ENCODE measurements at regions of chr2 and their contacts with region 1.

Region 1: GRCh38 chr2:109575373-109575772 is 38.4 kb downstream of the SEPTIN10 start:
- DNase-seq: no peak
- ATAC-seq: no peak
- H3K4me3 ChIP-seq: no peak overlapping the region
- H3K27ac ChIP-seq: no peak overlapping the region
- H3K4me1 ChIP-seq: no peaks in the 10 kb centered on the region
- H3K27me3 ChIP-seq: no peaks in the 10 kb centered on the region
- CTCF ChIP-seq: no peak
- POLR2A ChIP-seq: no peak
- RAD21 ChIP-seq: no peak

Region 2: DNA sequence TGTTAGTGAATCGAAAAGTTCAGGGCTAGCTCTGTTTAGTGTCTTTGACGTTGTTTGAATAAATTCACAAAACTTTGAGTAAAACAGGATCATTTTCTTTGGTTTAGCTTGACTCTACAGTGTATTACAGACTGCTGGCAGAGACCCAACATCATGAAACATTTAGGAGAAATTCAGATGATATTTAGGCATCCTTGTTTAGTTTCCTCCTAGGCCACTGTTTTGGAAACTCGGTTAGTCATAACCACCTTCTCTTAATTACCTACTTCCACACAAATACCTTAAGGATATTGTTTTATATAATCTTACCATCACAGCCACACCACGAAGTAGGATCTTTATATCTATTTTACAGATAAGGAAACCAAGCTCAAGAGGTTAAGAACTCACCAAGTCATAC is 1033.3 kb before region 1 on chr2:
- CTCF ChIA-PET with region 1: no interaction called
- POLR2A ChIA-PET with region 1: no interaction called
- dilution Hi-C with region 1: no loop called
- in situ Hi-C with region 1: no loop called
- intact Hi-C with region 1: no loop called
- DNase-seq: peak; percentile 63
- ATAC-seq: peak; percentile 73
- H3K4me3 ChIP-seq: no peak overlapping the region
- H3K27ac ChIP-seq: peak overlapping the region; percentile 45; the same call in 1 of the 2 replicates
- H3K4me1 ChIP-seq: peaks cover 12% of the 10 kb centered on the region
- H3K27me3 ChIP-seq: no peaks in the 10 kb centered on the region
- CTCF ChIP-seq: no peak
- POLR2A ChIP-seq: no peak
- RAD21 ChIP-seq: no peak

Region 3: DNA sequence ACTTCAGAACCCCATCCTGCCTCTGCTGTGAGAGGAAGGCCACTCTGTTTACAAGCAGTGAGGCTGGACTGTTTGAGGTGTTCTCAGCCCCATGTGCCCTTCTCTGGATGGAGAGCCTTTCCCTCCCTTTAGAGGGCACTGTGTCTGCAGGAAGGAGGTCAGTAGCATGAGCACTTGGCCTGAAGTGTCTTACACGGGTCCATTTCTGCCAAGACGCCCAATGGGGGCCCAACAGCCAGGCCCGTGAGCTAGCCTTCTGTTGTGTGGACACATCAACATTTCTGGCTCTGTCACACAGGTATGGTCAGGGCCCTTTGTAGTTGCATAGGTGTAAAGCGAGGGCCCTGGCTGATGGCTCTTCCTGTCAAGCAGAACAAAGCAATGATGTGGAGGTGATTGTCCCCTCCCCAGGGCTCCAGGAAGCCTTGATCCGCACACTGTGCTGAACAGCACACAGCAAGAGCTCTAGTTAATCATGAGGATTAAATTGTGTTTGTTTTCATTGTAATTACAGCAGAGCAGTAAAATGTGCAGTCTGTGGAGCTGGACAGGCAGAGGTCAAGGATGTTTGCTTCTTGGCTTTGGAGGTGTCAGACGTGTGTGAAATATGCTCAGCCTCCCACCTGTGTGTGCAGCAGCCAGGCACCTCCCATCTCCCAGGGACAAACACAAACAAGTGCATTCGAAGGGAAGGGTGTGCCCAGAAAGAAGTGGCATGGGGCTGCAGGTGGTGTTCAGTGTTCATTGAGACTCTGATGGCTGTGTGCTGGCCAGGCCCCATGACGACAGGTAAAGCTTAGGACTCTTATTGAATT is 314.3 kb before region 1 on chr2:
- CTCF ChIA-PET with region 1: no interaction called
- POLR2A ChIA-PET with region 1: no interaction called
- dilution Hi-C with region 1: no loop called
- in situ Hi-C with region 1: no loop called
- intact Hi-C with region 1: no loop called
- DNase-seq: peak; percentile 34
- ATAC-seq: no peak
- H3K4me3 ChIP-seq: no peak overlapping the region
- H3K27ac ChIP-seq: no peak overlapping the region
- H3K4me1 ChIP-seq: peaks cover 30% of the 10 kb centered on the region
- H3K27me3 ChIP-seq: no peaks in the 10 kb centered on the region
- CTCF ChIP-seq: peak; percentile 34
- POLR2A ChIP-seq: no peak
- RAD21 ChIP-seq: peak; percentile 45

Region 4: DNA sequence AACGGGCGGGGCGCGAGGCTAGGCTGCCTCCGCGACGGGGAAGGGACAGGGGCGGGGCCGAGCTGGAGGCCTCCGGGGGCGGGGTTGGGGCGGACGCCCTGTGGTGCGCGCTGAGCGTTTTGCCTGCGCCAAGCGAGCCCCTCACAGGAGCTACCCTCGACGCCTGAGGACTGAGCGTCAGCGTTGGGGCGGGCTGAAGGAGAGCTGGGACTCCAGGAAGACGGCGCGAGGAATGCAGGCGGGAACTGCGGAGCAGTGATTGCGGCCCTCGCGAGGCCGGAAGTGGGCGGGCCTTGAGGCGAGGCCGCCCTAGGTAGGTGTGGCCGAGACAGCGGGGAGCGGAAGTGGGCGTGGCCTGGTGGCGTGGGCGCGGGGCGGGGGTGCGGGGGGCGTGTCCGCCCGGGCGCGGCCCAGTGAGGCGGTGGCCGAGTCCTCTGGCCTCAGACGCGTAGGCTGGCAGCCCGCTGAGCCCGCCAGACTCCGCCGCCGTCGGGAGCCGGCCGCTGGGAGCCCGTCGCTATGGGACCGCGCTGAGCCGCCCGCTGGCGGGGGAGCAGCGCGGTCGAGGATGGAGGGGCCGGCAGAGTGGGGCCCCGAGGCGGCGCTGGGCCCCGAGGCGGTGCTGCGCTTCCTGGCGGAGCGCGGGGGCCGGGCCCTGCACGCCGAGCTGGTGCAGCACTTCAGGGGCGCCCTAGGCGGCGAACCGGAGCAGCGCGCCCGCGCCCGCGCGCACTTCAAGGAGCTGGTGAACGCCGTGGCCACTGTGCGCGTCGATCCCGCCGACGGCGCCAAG is 38.7 kb after region 1 on chr2 and contains the starts of genes SEPTIN10 and SOWAHC:
- CTCF ChIA-PET with region 1: interaction called, 3 read pairs
- POLR2A ChIA-PET with region 1: no interaction called
- dilution Hi-C with region 1: no loop called
- in situ Hi-C with region 1: loop called (anchors 5 kb)
- intact Hi-C with region 1: no loop called
- DNase-seq: peak; percentile 99
- ATAC-seq: peak; percentile 87
- H3K4me3 ChIP-seq: peak within 1 kb of the TSS; percentile 96
- H3K27ac ChIP-seq: peak within 1 kb of the TSS; percentile 87
- H3K4me1 ChIP-seq: peaks cover 18% of the 10 kb centered on the region
- H3K27me3 ChIP-seq: no peaks in the 10 kb centered on the region
- CTCF ChIP-seq: no peak
- POLR2A ChIP-seq: peak; percentile 93
- RAD21 ChIP-seq: no peak
- total RNA-seq, gene SEPTIN10: 82.6 and 83.9 TPM in 2 replicates
- total RNA-seq, gene SOWAHC: 4.8 and 8.9 TPM in 2 replicates

Region 5: GRCh38 chr2:109663721-109664120 is 88.3 kb after region 1 on chr2:
- CTCF ChIA-PET with region 1: no interaction called
- POLR2A ChIA-PET with region 1: no interaction called
- dilution Hi-C with region 1: no loop called
- in situ Hi-C with region 1: no loop called
- intact Hi-C with region 1: loop called (anchors 10 kb)
- DNase-seq: peak; percentile 28
- ATAC-seq: no peak; the same call in 1 of the 2 replicates
- H3K4me3 ChIP-seq: no peak overlapping the region
- H3K27ac ChIP-seq: no peak overlapping the region
- H3K4me1 ChIP-seq: no peaks in the 10 kb centered on the region
- H3K27me3 ChIP-seq: peaks cover 46% of the 10 kb centered on the region
- CTCF ChIP-seq: no peak
- POLR2A ChIP-seq: no peak
- RAD21 ChIP-seq: no peak

Region 6: GRCh38 chr2:109674894-109675534 is 99.6 kb after region 1 on chr2:
- CTCF ChIA-PET with region 1: no interaction called
- POLR2A ChIA-PET with region 1: no interaction called
- dilution Hi-C with region 1: no loop called
- in situ Hi-C with region 1: no loop called
- intact Hi-C with region 1: no loop called
- DNase-seq: no peak
- ATAC-seq: no peak
- H3K4me3 ChIP-seq: no peak overlapping the region
- H3K27ac ChIP-seq: no peak overlapping the region
- H3K4me1 ChIP-seq: peaks cover 2% of the 10 kb centered on the region; the same call in 1 of the 2 replicates
- H3K27me3 ChIP-seq: peaks cover 55% of the 10 kb centered on the region
- CTCF ChIP-seq: no peak
- POLR2A ChIP-seq: no peak
- RAD21 ChIP-seq: no peak

Region 7: GRCh38 chr2:109715313-109715805 is 140.0 kb after region 1 on chr2:
- CTCF ChIA-PET with region 1: no interaction called
- POLR2A ChIA-PET with region 1: no interaction called
- dilution Hi-C with region 1: no loop called
- in situ Hi-C with region 1: no loop called
- intact Hi-C with region 1: loop called (anchors 5 kb)
- DNase-seq: no peak
- ATAC-seq: no peak
- H3K4me3 ChIP-seq: no peak overlapping the region
- H3K27ac ChIP-seq: no peak overlapping the region
- H3K4me1 ChIP-seq: no peaks in the 10 kb centered on the region
- H3K27me3 ChIP-seq: peaks cover 27% of the 10 kb centered on the region
- CTCF ChIP-seq: peak; percentile 13; the same call in 1 of the 2 replicates
- POLR2A ChIP-seq: no peak
- RAD21 ChIP-seq: no peak